Gastrocnemius medialis (tissue), 4 donors: ENCODE measurements at regions of chr6 and their contacts with region 1.

Region 1: DNA sequence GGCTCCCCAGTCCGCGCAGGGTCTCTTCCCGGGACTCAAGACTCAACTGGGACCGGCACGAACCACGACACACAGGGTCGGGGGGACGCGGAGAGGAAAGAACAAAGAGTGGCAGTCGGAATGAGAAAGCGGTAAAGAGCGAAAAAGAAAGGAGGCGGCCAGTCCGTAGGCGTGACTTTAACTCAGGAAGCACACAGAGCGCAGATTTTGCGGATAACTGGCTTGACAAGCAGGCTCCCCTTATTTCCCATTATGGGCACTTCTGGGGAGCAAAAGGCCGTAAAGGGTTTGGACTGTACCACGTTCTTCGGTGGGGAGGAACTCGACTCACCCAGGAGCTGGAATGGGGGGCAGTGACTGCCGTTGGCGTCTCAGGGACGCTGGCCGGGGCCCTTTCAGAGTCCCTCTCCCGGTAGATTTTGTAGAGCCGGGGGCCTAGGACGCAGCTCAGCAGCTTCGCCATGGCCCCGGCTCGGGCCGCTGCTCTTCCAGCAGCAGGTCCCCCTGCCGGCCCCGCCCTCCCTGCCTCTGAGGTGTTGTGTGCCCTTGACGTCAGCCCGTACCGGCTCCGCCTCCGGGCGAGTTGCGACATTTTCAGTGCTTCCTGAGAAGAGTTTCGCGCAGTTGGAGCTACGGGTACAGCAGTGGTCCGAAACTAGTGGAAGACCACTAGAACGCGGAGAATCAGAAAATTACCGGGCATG is at the start of gene ABHD16A:
- DNase-seq: peak; percentile 99
- ATAC-seq: peak; percentile 94 to 95
- H3K4me3 ChIP-seq: peak within 1 kb of the TSS; percentile 65 to 85 (median 83)
- H3K27ac ChIP-seq: peak within 1 kb of the TSS; percentile 91 to 98 (median 96)
- H3K4me1 ChIP-seq: peaks cover 22 to 32% of the 10 kb centered on the region in 2 donors
- H3K27me3 ChIP-seq: no peaks in the 10 kb centered on the region
- CTCF ChIP-seq: peak in 2 of 5 experiments; percentile 5 to 20
- POLR2A ChIP-seq: peak; percentile 99
- total RNA-seq, gene ABHD16A: 39.2 to 82.9 (median 57.5) TPM

Region 2: GRCh38 chr6:31652925-31653718 is 49.8 kb before region 1 on chr6:
- in situ Hi-C with region 1: no loop called
- intact Hi-C with region 1: loop called (anchors 5 kb)
- DNase-seq: peak; percentile 81 to 88
- ATAC-seq: peak; percentile 83 to 87
- H3K4me3 ChIP-seq: peak overlapping the region; percentile 79 to 90 (median 84)
- H3K27ac ChIP-seq: peak overlapping the region; percentile 95 to 99 (median 98)
- H3K4me1 ChIP-seq: peaks cover 23 to 24% of the 10 kb centered on the region in 2 donors
- H3K27me3 ChIP-seq: no peaks in the 10 kb centered on the region
- CTCF ChIP-seq: no peak
- POLR2A ChIP-seq: peak; percentile 55 to 78

Region 3: DNA sequence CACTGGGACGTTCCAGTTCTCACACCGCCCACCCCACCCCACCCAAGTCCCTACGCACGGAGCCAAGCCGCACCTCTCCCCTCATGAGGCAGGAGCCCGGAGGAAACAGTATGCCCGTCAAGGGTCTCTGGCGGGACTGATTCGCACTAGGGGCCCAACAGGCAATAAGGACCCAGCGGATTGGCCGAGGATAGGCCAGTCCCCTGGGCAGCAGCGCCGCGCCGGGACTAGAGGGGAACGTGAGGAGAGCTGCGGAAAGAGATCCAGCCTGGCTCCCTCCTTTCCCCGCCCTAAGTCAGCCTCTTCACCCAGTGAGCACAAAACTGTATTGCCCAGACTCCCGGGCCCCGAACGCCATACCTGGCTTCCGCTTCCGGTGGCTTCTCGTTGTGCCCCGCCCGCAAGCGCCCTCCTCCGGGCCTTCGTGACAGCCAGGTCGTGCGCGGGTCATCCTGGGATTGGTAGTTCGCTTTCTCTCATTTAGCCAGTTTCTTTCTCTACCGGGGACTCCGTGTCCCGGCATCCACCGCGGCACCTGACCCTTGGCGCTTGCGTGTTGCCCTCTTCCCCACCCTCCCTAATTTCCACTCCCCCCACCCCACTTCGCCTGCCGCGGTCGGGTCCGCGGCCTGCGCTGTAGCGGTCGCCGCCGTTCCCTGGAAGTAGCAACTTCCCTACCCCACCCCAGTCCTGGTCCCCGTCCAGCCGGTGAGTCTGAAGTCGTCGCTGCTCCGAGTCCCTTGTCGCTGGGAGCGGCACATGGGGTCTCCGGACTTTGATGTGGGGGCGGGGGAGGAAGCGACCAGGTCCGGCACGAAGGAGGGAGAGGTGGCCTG is 37.3 kb before region 1 on chr6 and contains the start of gene CSNK2B:
- in situ Hi-C with region 1: no loop called
- intact Hi-C with region 1: loop called (anchors 1 kb)
- DNase-seq: peak; percentile 99
- ATAC-seq: peak; percentile 86
- H3K4me3 ChIP-seq: peak within 1 kb of the TSS; percentile 83 to 98 (median 94)
- H3K27ac ChIP-seq: peak within 1 kb of the TSS; percentile 93 to 100 (median 97)
- H3K4me1 ChIP-seq: peaks cover 25 to 36% of the 10 kb centered on the region in 2 donors
- H3K27me3 ChIP-seq: no peaks in the 10 kb centered on the region
- CTCF ChIP-seq: peak in 1 of 5 experiments; percentile 19
- POLR2A ChIP-seq: peak; percentile 72
- total RNA-seq, gene CSNK2B: 185 to 251 (median 226) TPM

Region 4: GRCh38 chr6:31729515-31729978 is 26.6 kb after region 1 on chr6:
- in situ Hi-C with region 1: no loop called
- intact Hi-C with region 1: loop called (anchors 1 kb)
- DNase-seq: peak; percentile 71 to 84
- ATAC-seq: peak; percentile 75 to 83
- H3K4me3 ChIP-seq: peak overlapping the region; percentile 62 to 95 (median 85)
- H3K27ac ChIP-seq: peak overlapping the region; percentile 78 to 92 (median 88)
- H3K4me1 ChIP-seq: peaks cover 9 to 11% of the 10 kb centered on the region in 2 donors
- H3K27me3 ChIP-seq: peaks cover 0 to 3% (median 0%) of the 10 kb centered on the region in 3 donors
- CTCF ChIP-seq: peak in 4 of 5 experiments; percentile 20 to 64 (median 42)
- POLR2A ChIP-seq: peak in 1 of 2 donors; percentile 16

Region 5: GRCh38 chr6:31739639-31740396 is 36.8 kb after region 1 on chr6 and contains the start of gene MSH5:
- in situ Hi-C with region 1: no loop called
- intact Hi-C with region 1: loop called (anchors 2 kb)
- DNase-seq: peak; percentile 99
- ATAC-seq: peak; percentile 99
- H3K4me3 ChIP-seq: peak within 1 kb of the TSS; percentile 62 to 79 (median 73)
- H3K27ac ChIP-seq: peak within 1 kb of the TSS; percentile 47 to 68 (median 63)
- H3K4me1 ChIP-seq: peaks cover 12 to 21% of the 10 kb centered on the region in 2 donors
- H3K27me3 ChIP-seq: peaks cover 0 to 9% (median 5%) of the 10 kb centered on the region in 3 donors
- CTCF ChIP-seq: no peak
- POLR2A ChIP-seq: peak; percentile 31 to 52
- total RNA-seq, gene MSH5: 0.35 to 7.8 (median 1.6) TPM

Region 6: DNA sequence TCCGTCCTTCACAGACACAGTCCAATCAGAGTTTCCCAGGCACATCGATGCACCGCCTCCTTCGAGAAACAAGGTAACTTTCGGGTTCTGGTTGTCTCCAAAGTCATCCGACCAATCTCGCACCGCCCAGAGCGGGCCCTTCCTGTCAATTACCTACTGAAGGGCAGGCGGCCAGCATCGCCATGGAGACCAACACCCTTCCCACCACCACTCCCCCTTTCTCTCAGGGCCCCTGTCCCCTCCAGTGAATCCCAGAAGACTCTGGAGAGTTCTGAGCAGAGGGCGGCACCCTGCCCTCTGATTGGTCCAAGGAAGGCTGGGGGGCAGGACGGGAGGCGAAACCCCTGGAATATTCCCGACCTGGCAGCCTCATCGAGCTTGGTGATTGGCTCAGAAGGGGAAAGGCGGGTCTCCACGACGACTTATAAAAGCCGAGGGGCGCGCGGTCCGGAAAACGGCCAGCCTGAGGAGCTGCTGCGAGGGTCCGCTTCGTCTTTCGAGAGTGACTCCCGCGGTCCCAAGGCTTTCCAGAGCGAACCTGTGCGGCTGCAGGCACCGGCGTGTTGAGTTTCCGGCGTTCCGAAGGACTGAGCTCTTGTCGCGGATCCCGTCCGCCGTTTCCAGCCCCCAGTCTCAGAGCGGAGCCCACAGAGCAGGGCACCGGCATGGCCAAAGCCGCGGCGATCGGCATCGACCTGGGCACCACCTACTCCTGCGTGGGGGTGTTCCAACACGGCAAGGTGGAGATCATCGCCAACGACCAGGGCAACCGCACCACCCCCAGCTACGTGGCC is 124.5 kb after region 1 on chr6 and contains the start of gene HSPA1B:
- in situ Hi-C with region 1: no loop called
- intact Hi-C with region 1: loop called (anchors 1 kb)
- DNase-seq: peak; percentile 100
- ATAC-seq: peak; percentile 79 to 80
- H3K4me3 ChIP-seq: peak within 1 kb of the TSS; percentile 73 to 92 (median 76)
- H3K27ac ChIP-seq: peak within 1 kb of the TSS; percentile 97 to 98 (median 97)
- H3K4me1 ChIP-seq: peaks cover 37 to 39% of the 10 kb centered on the region in 2 donors
- H3K27me3 ChIP-seq: no peaks in the 10 kb centered on the region
- CTCF ChIP-seq: peak in 2 of 5 experiments; percentile 16 to 17
- POLR2A ChIP-seq: peak; percentile 100
- total RNA-seq, gene HSPA1B: 71.5 to 178 (median 112) TPM

Region 7: DNA sequence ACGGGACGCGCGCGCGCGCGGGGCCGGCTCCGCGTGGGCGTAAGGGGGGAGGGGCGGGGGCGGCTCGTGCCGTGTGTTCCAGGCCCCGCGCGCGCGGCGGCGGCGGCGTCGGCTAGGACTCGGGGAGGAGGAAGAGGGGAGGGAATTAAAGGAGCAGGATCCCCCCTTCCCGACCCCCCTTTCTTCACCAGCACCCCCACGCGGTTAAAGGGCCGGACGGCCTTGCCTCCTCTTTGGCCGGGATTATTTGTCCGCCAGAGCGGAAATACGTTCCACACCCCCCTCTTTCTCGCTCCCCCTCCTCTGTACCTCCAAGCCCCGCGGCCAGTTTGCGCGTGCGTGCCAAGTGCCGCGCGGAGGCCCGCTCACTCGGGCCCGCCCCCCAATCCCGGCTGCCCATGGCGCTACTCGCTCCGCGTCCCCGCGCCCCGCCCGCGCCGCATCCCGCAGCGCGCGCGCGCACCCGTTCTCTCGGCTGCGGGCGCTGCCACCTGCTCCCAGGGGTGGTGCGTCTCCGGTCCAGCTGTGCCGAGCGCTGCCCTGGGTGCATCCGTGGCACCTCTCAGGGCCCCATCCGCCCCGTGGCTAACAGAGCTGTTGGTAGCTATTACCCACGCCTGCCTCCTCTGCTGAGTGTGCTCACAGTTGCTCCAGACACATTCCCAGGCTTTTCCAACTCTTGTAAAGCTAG is 199.1 kb after region 1 on chr6 and contains the start of gene ZBTB12:
- in situ Hi-C with region 1: no loop called
- intact Hi-C with region 1: loop called (anchors 5 kb)
- DNase-seq: peak; percentile 78 to 82
- ATAC-seq: peak; percentile 58 to 65
- H3K4me3 ChIP-seq: peak within 1 kb of the TSS; percentile 56 to 93 (median 80)
- H3K27ac ChIP-seq: peak within 1 kb of the TSS; percentile 78 to 89 (median 86)
- H3K4me1 ChIP-seq: peaks cover 15 to 19% of the 10 kb centered on the region in 2 donors
- H3K27me3 ChIP-seq: no peaks in the 10 kb centered on the region
- CTCF ChIP-seq: peak in 1 of 5 experiments; percentile 20
- POLR2A ChIP-seq: peak; percentile 22 to 33
- total RNA-seq, gene ZBTB12: 0.26 TPM in 1 of 4 donors, not detected in the others